Prostate gland (tissue), 2 donors: ENCODE measurements at regions of chr10 and their contacts with region 1.

Region 1: GRCh38 chr10:21173812-21174714 is 277.0 kb upstream of the NEBL start:
- DNase-seq: peak; percentile 78
- H3K4me3 ChIP-seq: peak overlapping the region; percentile 53 to 67
- H3K27ac ChIP-seq: peak overlapping the region; percentile 89 to 92
- H3K4me1 ChIP-seq: no peaks in the 10 kb centered on the region
- H3K27me3 ChIP-seq: no peaks in the 10 kb centered on the region
- CTCF ChIP-seq: no peak
- POLR2A ChIP-seq: peak; percentile 68

Region 2: DNA sequence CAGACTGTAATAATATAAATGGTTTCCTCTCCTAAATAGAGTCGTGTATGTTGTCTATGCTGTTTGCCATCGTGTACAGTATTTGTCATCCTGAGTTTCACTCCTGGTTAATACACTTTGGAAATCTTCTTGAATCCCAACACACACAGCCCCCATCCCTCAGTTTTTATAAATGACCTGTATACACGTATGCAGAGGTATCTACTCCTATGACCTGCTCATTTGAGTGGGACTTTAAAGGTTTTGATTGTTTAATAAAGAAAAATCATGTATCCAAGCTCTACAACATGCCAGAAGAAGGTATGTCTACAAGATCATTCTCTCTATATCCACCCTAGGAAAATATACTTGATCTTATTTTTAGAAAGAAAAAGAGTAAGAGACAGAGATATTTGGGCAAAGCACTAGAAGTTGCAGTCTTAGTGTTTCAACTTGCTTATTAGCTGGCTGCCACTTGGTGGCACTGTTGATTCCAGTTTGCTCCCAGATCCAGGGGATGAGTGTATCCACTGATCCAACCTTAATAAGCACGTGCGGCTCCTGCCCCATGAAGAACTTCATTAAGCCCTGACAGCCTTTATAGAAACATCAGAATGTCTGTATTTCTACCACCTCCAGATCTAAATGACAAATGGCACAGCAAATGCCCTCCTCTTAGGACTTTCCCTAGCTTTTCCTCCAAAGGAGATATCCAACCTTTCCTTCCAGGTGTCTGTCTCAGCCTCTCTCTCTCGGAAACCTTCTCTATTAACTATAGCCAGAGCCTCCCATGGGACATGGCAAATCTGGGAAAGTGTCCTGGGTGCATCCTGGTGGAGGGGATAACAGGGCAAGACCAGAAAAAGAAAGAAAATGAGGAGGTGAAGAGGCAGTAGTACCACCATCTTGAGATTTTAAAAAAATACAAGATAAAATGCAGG is 95.4 kb before region 1 on chr10:
- intact Hi-C with region 1: loop called (anchors 5 kb)
- DNase-seq: peak; percentile 69
- H3K4me3 ChIP-seq: no peak overlapping the region
- H3K27ac ChIP-seq: no peak overlapping the region
- H3K4me1 ChIP-seq: no peaks in the 10 kb centered on the region
- H3K27me3 ChIP-seq: no peaks in the 10 kb centered on the region
- CTCF ChIP-seq: peak; percentile 36 to 79 (median 76)
- POLR2A ChIP-seq: no peak

Region 3: GRCh38 chr10:21265621-21266020 is 91.6 kb after region 1 on chr10:
- intact Hi-C with region 1: loop called (anchors 10 kb)
- DNase-seq: no peak
- H3K4me3 ChIP-seq: no peak overlapping the region
- H3K27ac ChIP-seq: no peak overlapping the region
- H3K4me1 ChIP-seq: no peaks in the 10 kb centered on the region
- H3K27me3 ChIP-seq: no peaks in the 10 kb centered on the region
- CTCF ChIP-seq: no peak
- POLR2A ChIP-seq: no peak

Region 4: GRCh38 chr10:22742678-22743077 is 1568.6 kb after region 1 on chr10:
- intact Hi-C with region 1: no loop called
- DNase-seq: no peak
- H3K4me3 ChIP-seq: no peak overlapping the region
- H3K27ac ChIP-seq: no peak overlapping the region
- H3K4me1 ChIP-seq: no peaks in the 10 kb centered on the region
- H3K27me3 ChIP-seq: no peaks in the 10 kb centered on the region
- CTCF ChIP-seq: no peak
- POLR2A ChIP-seq: no peak